Activated CD8-positive, alpha-beta memory T cell treated with anti-CD3 and anti-CD28 coated beads, Interleukin-2, amount 10 ng/mL, durations not matched to agents 7 days and 5 days (primary cell): ENCODE measurements at regions of chr17 and their contacts with region 1.

Region 1: GRCh38 chr17:50161023-50161910 is 4.5 kb upstream of the SGCA start:
- DNase-seq: peak; percentile 96
- ATAC-seq: peak; percentile 98
- H3K4me3 Mint-ChIP-seq: peak overlapping the region; percentile 77
- H3K27ac Mint-ChIP-seq: peak overlapping the region; percentile 67
- H3K4me1 Mint-ChIP-seq: peaks cover 28% of the 10 kb centered on the region
- H3K27me3 Mint-ChIP-seq: peaks cover 8% of the 10 kb centered on the region

Region 2: DNA sequence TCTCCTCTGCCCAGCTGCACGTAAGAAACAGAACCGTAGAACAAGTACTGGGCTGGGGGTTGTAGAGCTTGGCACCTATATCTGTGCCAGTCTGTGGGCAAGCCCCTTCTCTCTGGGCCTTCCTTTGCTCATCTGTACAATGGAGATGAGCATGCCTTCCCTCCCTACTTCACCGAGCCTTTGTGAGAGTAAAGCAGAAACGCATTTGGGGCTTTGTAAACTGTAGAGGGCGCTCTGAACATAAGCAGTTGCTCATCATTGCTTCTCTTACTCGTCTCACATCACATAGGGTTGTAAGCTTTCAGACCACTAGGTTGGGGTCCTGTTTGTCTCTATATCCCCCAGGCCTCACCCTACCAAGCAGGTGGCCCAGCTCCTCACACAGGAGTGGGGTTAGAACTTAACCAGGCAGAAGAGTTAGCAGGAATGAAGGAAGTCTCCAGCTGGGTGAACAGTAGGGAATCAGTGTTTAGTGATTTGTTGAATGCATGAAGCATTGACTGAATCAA is 46.4 kb before region 1 on chr17:
- CTCF ChIA-PET with region 1: interaction called, 25 read pairs
- DNase-seq: peak; percentile 68
- ATAC-seq: peak; percentile 50
- H3K4me3 Mint-ChIP-seq: no peak overlapping the region
- H3K27ac Mint-ChIP-seq: no peak overlapping the region
- H3K4me1 Mint-ChIP-seq: peaks cover 7% of the 10 kb centered on the region
- H3K27me3 Mint-ChIP-seq: peaks cover 43% of the 10 kb centered on the region

Region 3: GRCh38 chr17:50129728-50130558 is 31.3 kb before region 1 on chr17 and contains the start of gene SAMD14:
- CTCF ChIA-PET with region 1: interaction called, 15 read pairs
- DNase-seq: peak; percentile 61
- ATAC-seq: peak; percentile 73
- H3K4me3 Mint-ChIP-seq: peak within 1 kb of the TSS; percentile 58
- H3K27ac Mint-ChIP-seq: no peak within 1 kb of the TSS
- H3K4me1 Mint-ChIP-seq: peaks cover 32% of the 10 kb centered on the region
- H3K27me3 Mint-ChIP-seq: peaks cover 32% of the 10 kb centered on the region
- total RNA-seq, gene SAMD14: 0.35 to 1.1 TPM

Region 4: GRCh38 chr17:50177983-50178834 is 16.9 kb after region 1 on chr17:
- CTCF ChIA-PET with region 1: interaction called, 18 read pairs
- DNase-seq: peak; percentile 55
- ATAC-seq: peak; percentile 79
- H3K4me3 Mint-ChIP-seq: no peak overlapping the region
- H3K27ac Mint-ChIP-seq: no peak overlapping the region
- H3K4me1 Mint-ChIP-seq: peaks cover 9% of the 10 kb centered on the region
- H3K27me3 Mint-ChIP-seq: peaks cover 2% of the 10 kb centered on the region

Region 5: DNA sequence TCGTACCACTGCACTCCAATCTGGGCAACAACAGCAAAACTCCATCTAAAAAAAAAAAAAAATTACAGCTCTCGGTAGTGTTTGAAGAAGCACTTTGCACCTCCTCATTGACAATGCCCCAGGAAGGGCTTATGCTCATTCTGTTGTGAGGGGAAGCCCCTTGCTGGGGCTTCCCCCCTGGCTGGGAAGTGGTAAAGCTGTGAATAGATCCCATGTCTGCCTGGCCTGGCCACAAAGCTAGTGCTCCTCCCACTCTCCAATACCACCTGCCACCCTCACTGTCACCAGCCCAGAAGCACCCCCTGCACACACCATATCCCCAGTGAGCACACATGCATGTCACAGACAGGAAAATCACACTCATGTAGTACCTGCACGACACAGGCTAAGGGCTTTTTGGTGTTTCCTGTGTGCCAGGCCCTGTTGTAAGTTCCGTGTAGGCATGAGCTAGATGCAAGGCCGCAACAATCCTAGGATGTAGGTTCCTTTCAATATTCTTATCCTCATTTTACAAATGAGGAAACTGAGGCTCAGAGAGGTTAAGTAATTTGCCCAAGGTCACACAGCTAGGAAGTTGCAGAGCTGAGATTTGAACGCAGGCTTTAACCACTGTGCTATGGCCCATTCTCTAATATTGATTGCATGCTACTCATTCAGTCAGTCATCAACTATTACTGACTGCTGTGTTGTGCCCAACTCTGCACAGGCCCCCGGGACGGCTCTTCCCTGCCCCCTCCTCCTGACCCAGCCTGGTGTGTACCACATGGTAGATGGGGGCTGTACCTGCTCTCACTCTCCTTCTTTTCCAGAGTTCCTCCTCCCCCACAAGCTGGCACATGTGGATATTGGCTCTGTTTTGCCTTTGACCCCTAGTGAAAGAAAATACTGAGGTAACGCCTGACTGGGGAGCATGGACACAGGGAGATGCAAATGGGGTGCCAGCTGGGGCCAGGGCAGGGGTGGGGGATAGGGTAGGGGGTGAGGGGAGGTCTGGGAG is 52.1 kb after region 1 on chr17:
- CTCF ChIA-PET with region 1: no interaction called
- DNase-seq: peak; percentile 73
- ATAC-seq: peak; percentile 88
- H3K4me3 Mint-ChIP-seq: no peak overlapping the region
- H3K27ac Mint-ChIP-seq: no peak overlapping the region
- H3K4me1 Mint-ChIP-seq: peaks cover 12% of the 10 kb centered on the region
- H3K27me3 Mint-ChIP-seq: peaks cover 63% of the 10 kb centered on the region

Region 6: DNA sequence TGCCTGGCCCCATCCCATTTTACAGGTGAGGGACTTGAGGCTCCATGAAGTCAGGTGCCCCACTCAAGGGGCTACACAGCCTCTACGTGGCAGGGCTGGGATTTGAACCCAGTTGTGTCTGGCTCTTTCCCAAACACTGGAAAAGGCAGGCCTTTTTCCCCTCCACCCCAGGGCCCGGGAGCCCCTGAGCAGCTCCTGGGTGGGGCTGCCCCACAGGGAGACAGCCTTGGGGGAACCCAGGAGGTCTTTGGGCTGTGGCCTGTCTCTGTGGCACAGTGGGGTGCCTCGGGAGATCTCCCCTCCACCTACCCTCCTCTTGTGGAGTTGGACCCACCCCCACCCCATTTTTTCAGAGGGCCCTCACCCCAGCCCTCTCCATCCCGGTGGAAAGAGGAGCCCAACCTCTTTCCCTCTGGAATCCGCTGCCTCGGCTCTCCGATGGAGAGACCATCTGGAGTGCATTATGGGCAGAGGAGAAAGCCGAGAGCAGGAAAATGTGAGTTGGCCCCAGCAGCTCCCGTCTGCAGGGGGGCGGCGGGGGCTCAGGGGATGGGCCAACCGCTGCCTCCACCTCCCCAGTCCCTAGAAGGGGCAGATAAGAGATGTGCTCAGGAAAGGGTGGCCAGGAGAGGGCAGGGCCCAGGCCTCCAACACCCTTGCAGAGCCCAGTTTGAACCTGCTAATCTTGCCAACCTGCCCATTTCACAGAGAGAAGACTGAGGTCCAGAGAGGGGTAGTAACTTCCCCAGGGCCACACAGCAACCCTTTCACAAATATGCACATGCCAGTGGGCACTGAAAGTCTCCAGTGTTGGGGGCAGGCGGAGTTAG is 97.6 kb after region 1 on chr17:
- CTCF ChIA-PET with region 1: no interaction called
- DNase-seq: no peak
- ATAC-seq: no peak
- H3K4me3 Mint-ChIP-seq: no peak overlapping the region
- H3K27ac Mint-ChIP-seq: no peak overlapping the region
- H3K4me1 Mint-ChIP-seq: no peaks in the 10 kb centered on the region
- H3K27me3 Mint-ChIP-seq: peaks cover 21% of the 10 kb centered on the region